MCF 10A (cell line): ENCODE measurements at regions of chr9 and their contacts with region 1.

Region 1: DNA sequence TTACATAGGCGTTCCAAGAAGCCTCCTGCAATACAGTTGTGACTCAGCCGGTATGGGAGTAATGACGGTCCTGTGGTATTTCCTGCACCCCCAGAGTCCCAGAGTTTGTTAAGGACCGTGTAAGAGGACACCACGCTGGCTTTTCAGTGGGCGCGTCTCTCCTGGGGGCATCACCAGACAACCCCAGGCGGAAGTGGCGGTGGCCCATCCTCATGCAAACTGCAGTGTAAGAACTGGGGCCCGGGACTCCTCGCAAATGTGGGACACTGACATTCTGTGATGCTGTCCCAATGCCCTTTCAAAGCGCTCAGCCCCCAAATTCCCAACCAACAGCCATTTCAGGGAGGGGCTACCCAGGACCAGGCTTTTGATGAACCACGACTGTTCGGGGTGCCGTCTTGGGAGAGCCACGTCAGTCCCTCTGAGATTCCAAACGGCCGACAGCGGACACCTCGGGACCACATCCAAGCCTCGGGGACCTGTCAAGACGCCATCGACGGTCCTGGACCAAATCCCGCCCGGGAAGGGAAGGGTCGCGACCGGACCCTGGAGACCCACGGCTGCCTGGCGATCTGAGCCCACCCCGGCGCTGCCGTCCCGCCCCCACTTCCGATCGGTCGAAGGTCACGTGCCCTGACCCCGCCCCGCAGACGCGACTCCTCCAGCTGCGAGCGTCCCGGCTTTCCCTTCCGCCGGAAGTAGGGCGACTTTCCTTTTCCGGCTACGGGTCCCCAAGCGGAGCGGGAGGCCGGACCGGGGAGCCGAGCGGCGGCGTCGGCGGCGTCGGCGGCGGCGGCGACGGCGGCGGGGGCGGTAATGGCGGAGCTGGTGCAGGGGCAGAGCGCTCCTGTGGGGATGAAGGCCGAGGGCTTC is at the start of gene FUBP3:
- DNase-seq: peak; percentile 90
- H3K4me3 Mint-ChIP-seq: peak within 1 kb of the TSS; percentile 91
- H3K27ac Mint-ChIP-seq: peak within 1 kb of the TSS; percentile 91
- H3K4me1 Mint-ChIP-seq: peaks cover 22% of the 10 kb centered on the region
- H3K27me3 Mint-ChIP-seq: no peaks in the 10 kb centered on the region
- CTCF ChIP-seq: no peak
- total RNA-seq, gene FUBP3: 58.0 and 68.3 TPM in 2 replicates

Region 2: GRCh38 chr9:130480331-130481072 is 98.6 kb before region 1 on chr9:
- CTCF ChIA-PET with region 1: no interaction called
- POLR2A ChIA-PET with region 1: interaction called, 3 read pairs
- intact Hi-C with region 1: loop called (anchors 10 kb)
- DNase-seq: no peak
- H3K4me3 Mint-ChIP-seq: no peak overlapping the region
- H3K27ac Mint-ChIP-seq: no peak overlapping the region
- H3K4me1 Mint-ChIP-seq: no peaks in the 10 kb centered on the region
- H3K27me3 Mint-ChIP-seq: no peaks in the 10 kb centered on the region
- CTCF ChIP-seq: no peak

Region 3: DNA sequence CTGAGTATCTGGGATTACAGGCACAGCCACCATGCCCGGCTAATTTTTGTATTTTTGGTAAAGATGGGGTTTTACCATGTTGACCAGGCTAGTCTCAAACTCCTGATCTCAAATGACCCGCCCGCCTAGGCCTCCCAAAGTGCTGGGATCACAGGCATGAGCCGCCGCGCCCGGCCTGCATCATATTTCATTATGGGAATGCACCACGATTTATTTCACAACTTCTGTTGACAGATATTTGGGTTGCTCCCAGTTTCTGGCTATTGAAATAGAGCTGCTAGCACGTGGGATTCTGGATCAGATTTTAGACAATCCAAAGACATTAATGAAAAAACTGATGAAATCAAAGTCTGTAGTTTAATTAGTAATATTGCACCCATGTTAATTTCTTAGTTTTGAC is 48.2 kb before region 1 on chr9:
- CTCF ChIA-PET with region 1: no interaction called
- POLR2A ChIA-PET with region 1: interaction called, 25 read pairs
- intact Hi-C with region 1: no loop called
- DNase-seq: peak; percentile 91
- H3K4me3 Mint-ChIP-seq: no peak overlapping the region
- H3K27ac Mint-ChIP-seq: no peak overlapping the region
- H3K4me1 Mint-ChIP-seq: peaks cover 13% of the 10 kb centered on the region
- H3K27me3 Mint-ChIP-seq: no peaks in the 10 kb centered on the region
- CTCF ChIP-seq: no peak

Region 4: DNA sequence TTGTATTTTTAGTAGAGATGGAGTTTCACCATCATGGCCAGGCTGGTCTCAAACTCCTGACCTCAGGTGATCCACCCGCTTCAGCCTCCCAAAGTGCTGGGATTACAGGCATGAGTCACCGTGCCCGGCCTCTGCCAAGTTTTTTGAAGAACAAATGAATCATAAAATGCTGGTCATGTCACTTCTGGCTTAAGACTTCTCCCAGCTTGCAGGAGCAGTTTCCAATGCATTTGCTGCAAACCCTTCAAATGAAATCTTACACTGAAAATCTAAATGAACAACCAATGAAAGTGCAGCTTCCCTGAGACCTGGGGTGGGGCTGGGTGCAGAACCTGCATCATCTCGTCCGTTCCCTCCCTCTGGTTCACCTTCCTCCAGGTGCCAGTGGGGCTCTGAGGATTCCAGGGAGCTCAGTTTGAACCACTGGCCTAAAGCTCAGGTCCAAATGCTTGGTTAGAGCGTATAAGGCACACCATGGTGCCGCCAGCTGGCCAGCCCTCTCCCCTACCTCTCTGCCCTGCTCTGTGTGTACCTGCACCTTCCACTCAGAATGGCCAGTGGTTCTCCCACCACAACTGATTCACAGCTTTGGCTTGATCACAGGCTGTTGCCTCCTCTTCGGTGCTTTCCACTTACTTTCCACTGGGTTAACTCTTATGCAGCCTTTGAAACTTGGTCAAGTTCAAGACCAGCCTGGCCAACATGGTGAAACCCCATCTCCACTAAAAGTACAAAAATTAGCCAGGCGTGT is 39.5 kb before region 1 on chr9:
- CTCF ChIA-PET with region 1: interaction called, 3 read pairs
- POLR2A ChIA-PET with region 1: interaction called, 16 read pairs
- intact Hi-C with region 1: no loop called
- DNase-seq: peak; percentile 94
- H3K4me3 Mint-ChIP-seq: peak overlapping the region; percentile 25
- H3K27ac Mint-ChIP-seq: peak overlapping the region; percentile 35
- H3K4me1 Mint-ChIP-seq: peaks cover 37% of the 10 kb centered on the region
- H3K27me3 Mint-ChIP-seq: no peaks in the 10 kb centered on the region
- CTCF ChIP-seq: no peak

Region 5: DNA sequence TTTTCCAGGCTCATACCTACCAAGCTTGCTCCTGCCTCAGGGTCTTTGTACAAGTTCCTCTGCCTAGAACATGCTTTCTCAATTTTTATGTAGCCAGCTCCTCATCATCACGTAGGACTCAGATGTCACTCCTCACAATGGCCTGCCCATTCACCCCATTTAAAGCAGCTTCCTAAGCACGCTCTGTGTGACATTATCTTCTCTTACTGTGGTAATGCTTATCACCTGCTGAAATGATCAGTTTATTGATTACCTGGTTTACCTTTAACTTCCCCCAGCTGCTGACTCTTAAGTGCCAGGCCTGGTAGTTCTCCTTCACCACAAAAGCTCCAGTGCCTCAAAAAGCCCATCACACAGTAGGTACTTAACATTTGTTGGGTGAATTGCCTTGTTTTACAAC is 13.9 kb after region 1 on chr9:
- CTCF ChIA-PET with region 1: interaction called, 3 read pairs
- POLR2A ChIA-PET with region 1: interaction called, 22 read pairs
- intact Hi-C with region 1: no loop called
- DNase-seq: no peak
- H3K4me3 Mint-ChIP-seq: no peak overlapping the region
- H3K27ac Mint-ChIP-seq: no peak overlapping the region
- H3K4me1 Mint-ChIP-seq: no peaks in the 10 kb centered on the region
- H3K27me3 Mint-ChIP-seq: no peaks in the 10 kb centered on the region
- CTCF ChIP-seq: no peak

Region 6: GRCh38 chr9:130682490-130683121 is 103.5 kb after region 1 on chr9:
- CTCF ChIA-PET with region 1: interaction called, 3 read pairs
- POLR2A ChIA-PET with region 1: interaction called, 6 read pairs
- intact Hi-C with region 1: loop called (anchors 10 kb)
- DNase-seq: peak; percentile 87
- H3K4me3 Mint-ChIP-seq: peak overlapping the region; percentile 81
- H3K27ac Mint-ChIP-seq: peak overlapping the region; percentile 33
- H3K4me1 Mint-ChIP-seq: peaks cover 6% of the 10 kb centered on the region
- H3K27me3 Mint-ChIP-seq: no peaks in the 10 kb centered on the region
- CTCF ChIP-seq: peak; percentile 88